ENCODE measurements at regions of chr1 and their contacts with region 1.

Region 1: GRCh38 chr1:152189657-152190442 is 30.8 kb upstream of the RPTN start:
- DNase-seq: peak; percentile 67 to 73 (median 68)
- H3K4me3 ChIP-seq: no peak overlapping the region
- H3K4me3 Mint-ChIP-seq: peak overlapping the region; percentile 65 to 88 (median 80)
- H3K27ac ChIP-seq: no peak overlapping the region
- H3K27ac Mint-ChIP-seq: peak overlapping the region in 4 of 7 donors; percentile 43 to 67 (median 46)
- H3K4me1 ChIP-seq: no peaks in the 10 kb centered on the region
- H3K4me1 Mint-ChIP-seq: peaks cover 6 to 7% (median 6%) of the 10 kb centered on the region in 4 donors
- H3K27me3 ChIP-seq: no peaks in the 10 kb centered on the region
- H3K27me3 Mint-ChIP-seq: peaks cover 2 to 6% of the 10 kb centered on the region in 2 donors

Region 2: DNA sequence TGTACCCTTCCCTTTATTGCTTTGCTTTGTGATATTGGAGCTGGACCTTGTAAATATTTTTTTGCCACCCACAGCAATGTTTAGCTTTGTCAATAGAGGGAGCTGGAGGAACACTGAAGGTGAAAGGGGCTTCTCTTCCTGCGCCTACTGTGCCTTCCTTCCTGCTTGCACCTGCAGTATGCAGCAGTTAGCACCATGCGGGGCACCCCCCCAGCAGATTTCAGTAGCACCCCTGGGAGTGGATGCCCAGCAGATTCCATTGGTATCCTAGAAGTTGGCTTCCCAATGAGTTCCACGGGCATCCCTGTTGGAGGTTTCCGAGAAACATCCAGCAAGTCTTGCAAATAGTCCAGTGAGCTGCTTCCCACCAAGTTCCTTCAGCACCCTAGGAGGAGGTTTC is 221.8 kb before region 1 on chr1:
- CTCF ChIA-PET with region 1: interaction called, 9 read pairs
- POLR2A ChIA-PET with region 1: no interaction called
- intact Hi-C with region 1: loop called (anchors 2 kb)
- DNase-seq: peak; percentile 60 to 75 (median 73)
- H3K4me3 ChIP-seq: no peak overlapping the region
- H3K4me3 Mint-ChIP-seq: peak overlapping the region in 1 of 8 donors; percentile 42
- H3K27ac ChIP-seq: no peak overlapping the region
- H3K27ac Mint-ChIP-seq: peak overlapping the region in 2 of 7 donors; percentile 65 to 68
- H3K4me1 ChIP-seq: peaks cover 9% of the 10 kb centered on the region
- H3K4me1 Mint-ChIP-seq: peaks cover 8 to 26% (median 13%) of the 10 kb centered on the region in 4 donors
- H3K27me3 ChIP-seq: no peaks in the 10 kb centered on the region
- H3K27me3 Mint-ChIP-seq: peaks cover 0 to 3% of the 10 kb centered on the region in 2 donors

Region 3: DNA sequence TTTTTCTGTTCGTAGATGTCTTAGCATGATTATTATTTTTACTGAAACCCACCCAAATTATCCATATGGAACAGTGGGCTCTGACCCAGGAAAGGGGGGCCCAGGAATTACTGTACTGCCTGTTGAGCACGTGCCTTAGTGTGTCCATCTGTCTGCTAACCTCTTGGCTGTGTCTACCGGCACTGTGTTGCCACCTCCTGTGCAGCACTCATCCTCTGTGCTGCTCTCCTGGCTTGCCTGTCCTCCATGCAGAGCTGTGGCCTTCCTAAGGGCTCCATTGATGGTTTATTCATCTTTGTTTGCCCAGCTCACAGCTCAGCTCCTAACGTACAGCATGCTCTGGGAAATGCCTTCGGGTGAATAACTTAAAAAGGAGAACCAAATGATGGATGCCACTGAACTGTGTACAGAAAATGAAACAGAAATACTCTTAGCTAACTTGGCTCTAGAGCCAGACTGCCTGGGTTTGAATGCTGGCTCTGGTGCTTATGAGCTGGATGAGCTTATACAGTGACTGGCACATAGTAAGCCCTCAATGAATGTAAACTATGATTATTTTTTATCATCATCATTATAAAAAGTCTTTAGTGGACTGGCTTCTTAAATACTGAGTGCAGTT is 19.5 kb before region 1 on chr1:
- CTCF ChIA-PET with region 1: interaction called, 60 read pairs
- POLR2A ChIA-PET with region 1: no interaction called
- intact Hi-C with region 1: no loop called
- DNase-seq: no peak
- H3K4me3 ChIP-seq: no peak overlapping the region
- H3K4me3 Mint-ChIP-seq: no peak overlapping the region
- H3K27ac ChIP-seq: no peak overlapping the region
- H3K27ac Mint-ChIP-seq: no peak overlapping the region
- H3K4me1 ChIP-seq: no peaks in the 10 kb centered on the region
- H3K4me1 Mint-ChIP-seq: peaks cover 6 to 7% (median 6%) of the 10 kb centered on the region in 4 donors
- H3K27me3 ChIP-seq: no peaks in the 10 kb centered on the region
- H3K27me3 Mint-ChIP-seq: peaks cover 4 to 15% of the 10 kb centered on the region in 2 donors

Region 4: DNA sequence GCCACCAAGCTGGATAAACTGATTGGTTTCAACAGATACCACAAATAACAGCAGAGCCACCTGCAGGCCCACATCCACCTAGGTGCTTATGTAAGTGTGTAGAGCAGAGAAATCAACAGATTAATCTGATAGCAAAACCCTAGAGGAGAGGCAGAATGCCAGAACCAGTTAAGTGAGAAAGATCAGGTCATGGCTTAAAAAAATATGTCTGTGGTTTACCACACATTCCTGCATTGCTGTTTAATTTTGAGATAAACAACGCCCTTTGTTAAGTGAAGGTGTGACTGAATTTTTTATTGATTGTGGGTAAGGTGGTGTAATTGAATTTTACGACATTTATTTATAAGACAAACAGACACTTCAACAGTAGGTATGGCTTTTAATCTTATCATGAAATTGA is 203.1 kb after region 1 on chr1:
- CTCF ChIA-PET with region 1: interaction called, 6 read pairs
- POLR2A ChIA-PET with region 1: interaction called, 3 read pairs
- intact Hi-C with region 1: loop called (anchors 5 kb)
- DNase-seq: peak; percentile 74 to 85 (median 82)
- H3K4me3 ChIP-seq: no peak overlapping the region
- H3K4me3 Mint-ChIP-seq: peak overlapping the region; percentile 2 to 93 (median 70)
- H3K27ac ChIP-seq: no peak overlapping the region
- H3K27ac Mint-ChIP-seq: peak overlapping the region; percentile 43 to 94 (median 79)
- H3K4me1 ChIP-seq: peaks cover 44% of the 10 kb centered on the region
- H3K4me1 Mint-ChIP-seq: peaks cover 35 to 47% (median 39%) of the 10 kb centered on the region in 4 donors
- H3K27me3 ChIP-seq: peaks cover 7% of the 10 kb centered on the region
- H3K27me3 Mint-ChIP-seq: peaks cover 12 to 17% of the 10 kb centered on the region in 2 donors

Region 5: GRCh38 chr1:152440635-152441471 is 251.0 kb after region 1 on chr1:
- CTCF ChIA-PET with region 1: interaction called, 84 read pairs
- POLR2A ChIA-PET with region 1: interaction called, 5 read pairs
- intact Hi-C with region 1: loop called (anchors 1 kb)
- DNase-seq: peak; percentile 74 to 77 (median 75)
- H3K4me3 ChIP-seq: no peak overlapping the region
- H3K4me3 Mint-ChIP-seq: peak overlapping the region in 1 of 8 donors; percentile 56
- H3K27ac ChIP-seq: no peak overlapping the region
- H3K27ac Mint-ChIP-seq: peak overlapping the region in 2 of 7 donors; percentile 44 to 68
- H3K4me1 ChIP-seq: no peaks in the 10 kb centered on the region
- H3K4me1 Mint-ChIP-seq: peaks cover 4 to 14% (median 8%) of the 10 kb centered on the region in 4 donors
- H3K27me3 ChIP-seq: no peaks in the 10 kb centered on the region
- H3K27me3 Mint-ChIP-seq: peaks cover 19 to 22% of the 10 kb centered on the region in 2 donors